Endothelial cell of umbilical vein (primary cell): ENCODE measurements at regions of chr9 and their contacts with region 1.

Region 1: DNA sequence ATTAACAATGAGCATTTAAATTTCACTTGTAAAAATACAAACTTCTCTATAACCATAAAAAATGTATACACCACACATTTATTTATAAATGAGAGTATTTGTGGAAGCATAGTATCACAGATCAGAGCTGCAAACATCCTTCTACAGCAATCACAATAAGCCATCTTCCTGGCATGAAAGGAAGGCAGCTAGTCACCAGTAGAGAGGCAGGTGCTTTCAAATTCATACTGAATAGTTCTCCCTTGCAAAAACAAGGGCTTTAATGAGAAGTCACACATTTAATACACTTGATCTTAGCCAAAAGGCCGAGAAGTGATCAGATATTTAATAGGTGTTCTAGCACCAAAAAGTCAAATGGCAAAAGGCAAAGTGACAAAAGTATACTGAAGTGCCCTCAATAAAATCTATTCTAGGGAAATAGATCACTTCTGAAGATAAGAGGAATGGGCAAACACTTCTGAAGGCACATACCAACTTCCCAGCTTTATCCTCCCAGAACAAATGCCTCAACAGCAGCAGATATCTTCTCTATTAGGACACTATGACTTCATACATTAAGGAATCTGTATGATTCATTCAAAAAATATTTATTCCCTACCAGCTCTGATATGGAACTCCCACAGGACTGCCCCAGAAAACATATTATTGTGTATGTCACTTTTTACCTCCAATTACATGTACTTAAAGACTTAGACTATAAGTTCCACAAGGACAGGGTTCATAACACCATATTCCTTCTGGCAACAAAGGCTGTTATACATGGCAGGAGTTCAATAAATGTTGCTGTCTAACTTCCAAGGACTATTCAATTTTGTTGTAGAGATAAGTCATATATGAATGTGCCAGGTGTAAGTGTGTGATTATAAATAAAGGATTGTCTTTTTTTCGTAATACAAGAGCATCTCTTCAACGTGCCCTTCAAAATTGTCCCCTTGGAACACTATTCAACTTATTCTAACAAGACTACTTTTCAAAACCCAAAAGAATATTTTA is 31.7 kb downstream of the MAPKAP1 start:
- DNase-seq: peak; percentile 89
- H3K4me3 ChIP-seq: peak overlapping the region in 1 of 3 experiments; percentile 19
- H3K27ac ChIP-seq: peak overlapping the region; percentile 95
- H3K4me1 ChIP-seq: peaks cover 29% of the 10 kb centered on the region
- H3K27me3 ChIP-seq: no peaks in the 10 kb centered on the region
- CTCF ChIP-seq: no peak
- POLR2A ChIP-seq: no peak

Region 2: GRCh38 chr9:125649315-125649714 is 26.0 kb before region 1 on chr9:
- CTCF ChIA-PET with region 1: interaction called, 10 read pairs
- POLR2A ChIA-PET with region 1: interaction called, 5 read pairs
- dilution Hi-C with region 1: no loop called
- intact Hi-C with region 1: loop called (anchors 1 kb)
- DNase-seq: peak; percentile 92
- H3K4me3 ChIP-seq: no peak overlapping the region
- H3K27ac ChIP-seq: peak overlapping the region; percentile 99
- H3K4me1 ChIP-seq: peaks cover 52% of the 10 kb centered on the region
- H3K27me3 ChIP-seq: no peaks in the 10 kb centered on the region
- CTCF ChIP-seq: no peak
- POLR2A ChIP-seq: peak; percentile 41

Region 3: DNA sequence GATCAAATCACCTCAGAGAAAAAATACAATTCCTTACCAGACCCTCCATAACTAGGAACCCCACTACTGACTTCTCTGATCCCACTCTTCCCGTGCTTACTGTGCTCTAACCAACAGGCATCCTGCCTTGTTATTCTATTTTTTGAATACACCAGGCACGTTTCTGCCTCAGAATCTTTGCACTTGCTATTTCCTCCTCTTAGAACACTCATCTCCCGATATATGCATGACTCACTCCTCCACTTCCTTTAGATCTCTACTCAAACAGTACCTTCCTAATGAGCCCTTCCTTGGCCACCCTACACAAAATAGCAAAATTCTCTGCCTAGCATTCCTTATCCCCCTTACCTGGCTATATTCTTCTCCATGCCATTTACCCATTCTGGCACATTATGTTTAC is 12.2 kb before region 1 on chr9:
- CTCF ChIA-PET with region 1: interaction called, 14 read pairs
- POLR2A ChIA-PET with region 1: no interaction called
- dilution Hi-C with region 1: no loop called
- intact Hi-C with region 1: no loop called
- DNase-seq: peak; percentile 88
- H3K4me3 ChIP-seq: no peak overlapping the region
- H3K27ac ChIP-seq: peak overlapping the region; percentile 51
- H3K4me1 ChIP-seq: peaks cover 28% of the 10 kb centered on the region
- H3K27me3 ChIP-seq: no peaks in the 10 kb centered on the region
- CTCF ChIP-seq: no peak
- POLR2A ChIP-seq: peak; percentile 62

Region 4: DNA sequence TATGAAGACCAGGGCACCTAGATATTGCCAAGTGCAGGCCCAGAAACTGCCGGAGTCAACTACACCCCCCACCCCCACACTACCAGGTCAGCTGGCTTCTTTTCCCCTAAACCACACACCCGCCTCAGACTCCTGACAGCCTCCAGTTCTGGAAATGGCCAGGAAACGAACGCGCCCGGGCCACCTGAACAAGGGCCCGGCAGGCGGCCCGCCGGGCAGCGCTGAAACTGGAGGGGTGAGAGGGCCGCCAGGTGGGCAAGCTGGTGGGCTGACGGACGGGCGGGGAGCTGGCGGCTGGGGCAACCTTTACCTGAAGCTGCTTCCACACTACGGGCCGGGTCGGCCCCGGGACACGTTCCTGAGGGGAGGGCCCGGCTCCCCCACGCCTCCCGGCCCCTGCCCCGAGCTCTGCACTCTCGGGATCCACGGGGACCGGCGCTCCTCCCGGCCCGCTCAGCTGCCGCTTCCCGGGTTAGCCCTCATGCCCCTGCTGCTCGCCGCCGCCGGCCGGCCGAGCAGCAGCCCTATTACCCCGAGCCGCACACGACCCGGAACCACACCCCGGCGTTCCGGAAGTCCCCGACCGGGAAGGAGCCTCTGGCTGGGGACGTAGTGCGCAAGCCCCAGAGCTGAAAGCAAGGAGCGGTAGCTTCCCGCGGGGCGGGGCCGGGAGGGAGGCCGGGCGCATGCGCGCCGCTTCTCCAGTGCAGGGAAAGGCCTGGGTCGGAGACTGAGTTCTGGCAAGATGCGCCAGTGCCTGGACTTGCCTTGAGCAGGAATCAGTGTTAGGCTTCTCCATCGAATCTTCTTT is 31.6 kb after region 1 on chr9 and contains the start of gene MAPKAP1:
- CTCF ChIA-PET with region 1: interaction called, 4 read pairs
- POLR2A ChIA-PET with region 1: interaction called, 6 read pairs
- dilution Hi-C with region 1: no loop called
- intact Hi-C with region 1: loop called (anchors 1 kb)
- DNase-seq: peak; percentile 95
- H3K4me3 ChIP-seq: peak within 1 kb of the TSS; percentile 75 to 85 (median 84)
- H3K27ac ChIP-seq: peak within 1 kb of the TSS; percentile 82
- H3K4me1 ChIP-seq: peaks cover 13% of the 10 kb centered on the region
- H3K27me3 ChIP-seq: no peaks in the 10 kb centered on the region
- CTCF ChIP-seq: no peak
- POLR2A ChIP-seq: peak; percentile 82
- total RNA-seq, gene MAPKAP1: 98.6 and 99.1 TPM in 2 replicates

Region 5: GRCh38 chr9:126116351-126117157 is 441.3 kb after region 1 on chr9:
- CTCF ChIA-PET with region 1: no interaction called
- POLR2A ChIA-PET with region 1: no interaction called
- dilution Hi-C with region 1: no loop called
- intact Hi-C with region 1: no loop called
- DNase-seq: no peak
- H3K4me3 ChIP-seq: no peak overlapping the region
- H3K27ac ChIP-seq: no peak overlapping the region
- H3K4me1 ChIP-seq: no peaks in the 10 kb centered on the region
- H3K27me3 ChIP-seq: no peaks in the 10 kb centered on the region
- CTCF ChIP-seq: no peak
- POLR2A ChIP-seq: no peak

Region 6: GRCh38 chr9:126375386-126375785 is 700.1 kb after region 1 on chr9:
- CTCF ChIA-PET with region 1: no interaction called
- POLR2A ChIA-PET with region 1: no interaction called
- dilution Hi-C with region 1: no loop called
- intact Hi-C with region 1: loop called (anchors 10 kb)
- DNase-seq: peak; percentile 65
- H3K4me3 ChIP-seq: no peak overlapping the region
- H3K27ac ChIP-seq: peak overlapping the region; percentile 38
- H3K4me1 ChIP-seq: peaks cover 47% of the 10 kb centered on the region
- H3K27me3 ChIP-seq: no peaks in the 10 kb centered on the region
- CTCF ChIP-seq: no peak
- POLR2A ChIP-seq: no peak